Heart right ventricle (tissue), 16 donors: ENCODE measurements at regions of chr2 and their contacts with region 1.

Region 1: GRCh38 chr2:113756355-113757137 is at the start of gene SLC35F5:
- DNase-seq: peak; percentile 91 to 95
- ATAC-seq: peak; percentile 97 to 99 (median 98)
- H3K4me3 ChIP-seq: peak within 1 kb of the TSS; percentile 65 to 96 (median 84)
- H3K27ac ChIP-seq: peak within 1 kb of the TSS; percentile 86 to 97 (median 93)
- H3K4me1 ChIP-seq: peaks cover 0 to 48% (median 24%) of the 10 kb centered on the region in 9 donors
- H3K27me3 ChIP-seq: no peaks in the 10 kb centered on the region
- CTCF ChIP-seq: no peak
- total RNA-seq, gene SLC35F5: 52.9 to 67.1 (median 59.2) TPM

Region 2: GRCh38 chr2:113784823-113785744 is 28.5 kb after region 1 on chr2:
- intact Hi-C with region 1: loop called in 1 of 10 experiments (anchors 1 kb)
- DNase-seq: no peak
- ATAC-seq: peak in 7 of 8 donors; percentile 34 to 91 (median 79)
- H3K4me3 ChIP-seq: no peak overlapping the region
- H3K27ac ChIP-seq: peak overlapping the region in 9 of 10 donors; percentile 21 to 75 (median 58)
- H3K4me1 ChIP-seq: peaks cover 0 to 18% (median 0%) of the 10 kb centered on the region in 9 donors
- H3K27me3 ChIP-seq: no peaks in the 10 kb centered on the region
- CTCF ChIP-seq: no peak

Region 3: DNA sequence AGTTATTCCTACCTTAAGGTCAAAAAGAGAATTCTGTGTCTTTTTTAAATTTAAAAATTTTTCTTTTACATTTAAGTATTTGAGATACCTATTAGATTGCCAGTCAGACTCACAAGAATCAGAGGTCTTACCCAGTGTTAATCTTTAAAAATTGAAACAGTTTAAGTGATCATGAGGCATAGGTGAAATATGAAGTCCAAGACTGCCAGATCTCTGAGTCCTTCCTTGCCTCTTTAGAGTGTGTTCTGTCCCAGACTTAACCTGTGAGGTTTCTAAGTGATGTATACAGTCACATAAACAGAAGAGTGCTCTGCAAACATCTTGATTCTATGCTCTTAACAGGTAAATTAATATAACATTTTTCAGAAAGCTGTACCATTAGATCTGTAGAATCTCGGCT is 173.9 kb after region 1 on chr2:
- intact Hi-C with region 1: loop called in 2 of 10 experiments (anchors 10 kb)
- DNase-seq: no peak
- ATAC-seq: no peak
- H3K4me3 ChIP-seq: no peak overlapping the region
- H3K27ac ChIP-seq: no peak overlapping the region
- H3K4me1 ChIP-seq: peaks cover 0 to 8% (median 0%) of the 10 kb centered on the region in 9 donors
- H3K27me3 ChIP-seq: no peaks in the 10 kb centered on the region
- CTCF ChIP-seq: no peak

Region 4: GRCh38 chr2:113959202-113959601 is 202.7 kb after region 1 on chr2:
- intact Hi-C with region 1: loop called in 1 of 10 experiments (anchors 10 kb)
- DNase-seq: no peak
- ATAC-seq: no peak
- H3K4me3 ChIP-seq: no peak overlapping the region
- H3K27ac ChIP-seq: no peak overlapping the region
- H3K4me1 ChIP-seq: no peaks in the 10 kb centered on the region
- H3K27me3 ChIP-seq: no peaks in the 10 kb centered on the region
- CTCF ChIP-seq: no peak